Gastrocnemius medialis (tissue), 4 donors: ENCODE measurements at regions of chr15 and their contacts with region 1.

Region 1: GRCh38 chr15:51203797-51204196 is 109.1 kb upstream of the TNFAIP8L3 start:
- DNase-seq: no peak
- ATAC-seq: peak in 1 of 2 donors; percentile 50
- H3K4me3 ChIP-seq: no peak overlapping the region
- H3K27ac ChIP-seq: no peak overlapping the region
- H3K4me1 ChIP-seq: no peaks in the 10 kb centered on the region
- H3K27me3 ChIP-seq: no peaks in the 10 kb centered on the region
- CTCF ChIP-seq: no peak
- POLR2A ChIP-seq: no peak

Region 2: DNA sequence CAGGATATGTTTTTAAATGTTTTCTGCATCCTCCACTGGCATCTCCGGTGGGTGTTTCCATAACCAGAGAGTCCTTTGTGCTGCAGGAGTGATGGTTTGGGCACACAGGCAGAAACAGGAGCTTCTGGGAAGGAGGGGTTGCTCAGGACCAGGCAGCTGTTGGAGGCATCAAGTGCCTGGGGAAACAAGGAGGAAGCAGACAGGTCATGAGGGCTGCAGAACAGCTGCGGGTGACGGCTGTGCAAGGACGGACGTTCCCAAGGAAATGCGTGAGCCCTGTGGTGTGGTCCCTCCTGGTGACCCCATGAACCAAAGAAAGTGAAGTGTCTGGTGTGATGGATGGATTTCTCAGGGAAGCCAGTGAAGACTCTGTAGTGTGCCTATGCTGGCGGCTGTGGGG is 47.9 kb before region 1 on chr15:
- in situ Hi-C with region 1: loop called in 2 of 4 experiments (anchors 5 to 10 kb)
- intact Hi-C with region 1: no loop called
- DNase-seq: no peak
- ATAC-seq: no peak
- H3K4me3 ChIP-seq: no peak overlapping the region
- H3K27ac ChIP-seq: no peak overlapping the region
- H3K4me1 ChIP-seq: no peaks in the 10 kb centered on the region
- H3K27me3 ChIP-seq: no peaks in the 10 kb centered on the region
- CTCF ChIP-seq: no peak
- POLR2A ChIP-seq: no peak